ENCODE measurements at regions of chr3 and their contacts with region 1.

Region 1: DNA sequence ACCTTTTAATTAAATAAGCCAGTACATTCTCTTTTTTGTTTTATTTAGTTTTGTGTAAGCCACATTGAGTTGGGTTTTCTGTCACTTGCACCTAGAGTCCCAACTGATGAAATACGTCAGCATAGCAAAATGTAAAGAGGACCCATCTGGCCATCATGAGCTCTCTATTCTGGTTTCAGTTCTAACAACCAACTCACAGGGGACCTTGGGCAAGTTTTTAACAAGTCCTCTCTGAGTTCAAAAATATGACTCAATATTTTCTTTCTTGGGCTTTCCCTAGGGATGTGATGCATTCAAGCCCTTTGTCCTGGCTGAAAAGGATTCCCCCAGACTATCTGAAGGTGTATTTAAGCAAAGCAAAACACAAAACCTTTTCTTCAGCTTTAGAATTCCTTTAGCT is 32.9 kb downstream of the PLCH1 start:
- DNase-seq: no peak
- H3K4me3 ChIP-seq: no peak overlapping the region
- H3K27ac ChIP-seq: no peak overlapping the region
- H3K4me1 ChIP-seq: no peaks in the 10 kb centered on the region
- H3K27me3 ChIP-seq: no peaks in the 10 kb centered on the region
- CTCF ChIP-seq: no peak
- POLR2A ChIP-seq: no peak

Region 2: DNA sequence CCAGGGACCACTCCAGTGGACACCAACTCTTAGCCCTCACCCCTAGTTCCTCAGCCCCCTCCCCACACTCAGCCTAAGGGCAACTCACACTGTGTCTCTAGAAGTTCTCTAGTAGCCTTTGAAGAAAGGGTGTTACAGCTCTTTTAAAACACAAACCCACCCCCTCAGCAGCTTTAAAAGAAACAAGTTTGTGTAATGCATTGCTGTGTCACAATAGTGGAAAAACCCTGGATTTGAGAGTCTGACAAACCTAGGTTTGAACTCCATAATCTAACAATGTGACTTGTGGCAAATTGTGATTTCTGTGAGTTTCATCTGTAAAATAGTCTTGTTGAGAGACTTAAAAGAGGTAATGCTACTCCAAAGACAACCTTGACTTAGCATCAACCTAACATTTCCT is 21.1 kb before region 1 on chr3:
- intact Hi-C with region 1: no loop called
- DNase-seq: no peak
- H3K4me3 ChIP-seq: no peak overlapping the region
- H3K27ac ChIP-seq: no peak overlapping the region
- H3K4me1 ChIP-seq: no peaks in the 10 kb centered on the region
- H3K27me3 ChIP-seq: no peaks in the 10 kb centered on the region
- CTCF ChIP-seq: no peak
- POLR2A ChIP-seq: no peak

Region 3: GRCh38 chr3:155737844-155738460 is 25.9 kb after region 1 on chr3:
- intact Hi-C with region 1: loop called (anchors 1 kb)
- DNase-seq: no peak
- H3K4me3 ChIP-seq: no peak overlapping the region
- H3K27ac ChIP-seq: peak overlapping the region; percentile 20 to 52
- H3K4me1 ChIP-seq: no peaks in the 10 kb centered on the region
- H3K27me3 ChIP-seq: no peaks in the 10 kb centered on the region
- CTCF ChIP-seq: no peak
- POLR2A ChIP-seq: no peak

Measured in breast epithelium (tissue), 4 donors.